Posterior vena cava (tissue), 2 donors: ENCODE measurements at regions of chr11 and their contacts with region 1.

Region 1: DNA sequence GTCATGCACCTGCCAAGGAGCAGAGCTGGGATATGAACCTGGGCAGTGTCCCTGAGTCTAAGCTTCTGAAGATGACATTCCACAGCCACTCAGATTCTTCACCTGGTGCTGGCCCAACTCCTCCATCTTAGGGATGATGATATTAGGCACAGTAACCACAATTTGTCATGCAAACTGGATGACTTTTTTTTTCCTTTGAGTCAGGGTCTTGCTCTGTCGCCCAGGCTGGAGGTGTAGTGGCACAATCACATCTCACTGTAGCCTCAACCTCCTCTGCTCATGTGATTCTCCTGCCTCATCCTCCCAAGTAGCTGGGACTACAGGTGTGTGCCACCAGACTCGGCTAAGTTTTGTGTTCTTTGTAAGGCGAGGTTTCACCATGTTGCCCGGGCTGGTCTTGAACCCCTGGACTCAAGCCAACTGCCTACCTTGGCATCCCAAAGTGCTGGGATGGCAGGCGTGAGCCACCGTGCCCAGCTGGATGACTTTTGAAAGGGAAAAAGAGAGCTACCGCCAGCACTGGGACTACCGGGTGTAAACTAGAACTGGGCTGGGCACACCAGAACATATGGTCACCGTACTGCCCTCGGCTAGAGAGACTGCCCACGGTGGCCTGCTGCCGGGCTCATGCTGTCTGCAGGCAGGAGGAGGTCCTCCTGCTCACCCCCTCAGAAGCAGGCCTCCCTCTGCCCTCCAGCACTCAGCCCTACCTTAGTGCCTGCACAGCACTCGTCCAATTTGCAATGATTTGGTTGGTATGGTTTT is 77.7 kb downstream of the NAT10 start:
- DNase-seq: no peak

Region 2: GRCh38 chr11:34165518-34166277 is 17.4 kb before region 1 on chr11:
- intact Hi-C with region 1: loop called in 1 of 2 experiments (anchors 1 kb)
- DNase-seq: no peak